GM12878 (cell line): ENCODE measurements at regions of chr4 and their contacts with region 1.

Region 1: DNA sequence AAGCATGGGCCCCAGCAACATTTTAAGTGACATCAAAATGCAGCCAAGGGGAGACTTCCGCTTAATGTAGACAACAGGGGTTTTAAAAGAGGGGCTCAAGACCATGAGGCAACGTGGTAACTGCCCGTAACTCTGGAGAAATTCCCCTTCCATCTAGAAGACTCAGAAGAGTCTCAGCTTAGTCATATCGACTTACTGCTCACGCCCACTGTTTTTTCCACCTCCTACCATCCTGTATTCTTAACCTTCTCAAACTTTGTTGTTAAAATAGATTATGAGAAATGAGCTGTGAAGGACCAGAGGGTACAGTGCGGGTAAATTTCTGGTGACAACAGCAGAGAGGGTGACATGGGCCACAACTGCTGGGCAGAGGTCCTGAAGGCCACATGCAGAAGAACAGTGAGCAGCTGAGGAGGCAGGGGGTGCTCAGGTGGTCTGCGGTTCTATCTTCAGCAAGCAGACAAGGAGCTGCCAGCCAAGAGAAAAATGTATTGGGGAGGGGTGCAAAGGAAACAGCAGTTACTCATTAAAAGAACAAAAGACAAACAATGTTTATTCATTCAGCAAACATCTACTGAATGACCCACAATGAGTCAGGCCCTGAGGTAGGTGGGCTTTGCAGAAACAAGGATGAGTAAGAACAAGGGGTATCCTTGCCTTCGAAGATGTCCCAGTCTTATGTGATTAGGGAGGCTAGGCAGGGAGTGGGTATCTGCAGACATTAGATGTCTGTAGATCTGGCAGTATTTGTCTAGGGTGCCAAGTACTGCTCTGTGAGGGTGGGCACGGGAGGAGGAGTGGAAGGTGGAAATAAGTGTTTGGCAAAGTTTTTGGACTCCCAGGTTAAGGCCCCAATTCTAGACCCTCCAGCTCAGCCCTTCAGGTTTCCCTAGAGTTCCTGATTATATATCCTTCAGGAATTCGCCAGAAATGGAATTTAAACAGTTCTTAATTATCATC is 175.3 kb downstream of the TSPAN5 start:
- DNase-seq: peak; percentile 56
- ATAC-seq: peak; percentile 90
- H3K4me3 ChIP-seq: no peak overlapping the region; the same call in 1 of the 2 replicates
- H3K27ac ChIP-seq: no peak overlapping the region
- H3K4me1 ChIP-seq: peaks cover 9% of the 10 kb centered on the region
- H3K27me3 ChIP-seq: no peaks in the 10 kb centered on the region
- CTCF ChIP-seq: no peak
- EP300 ChIP-seq: peak; percentile 70 to 91
- POLR2A ChIP-seq: no peak
- RAD21 ChIP-seq: no peak

Region 2: DNA sequence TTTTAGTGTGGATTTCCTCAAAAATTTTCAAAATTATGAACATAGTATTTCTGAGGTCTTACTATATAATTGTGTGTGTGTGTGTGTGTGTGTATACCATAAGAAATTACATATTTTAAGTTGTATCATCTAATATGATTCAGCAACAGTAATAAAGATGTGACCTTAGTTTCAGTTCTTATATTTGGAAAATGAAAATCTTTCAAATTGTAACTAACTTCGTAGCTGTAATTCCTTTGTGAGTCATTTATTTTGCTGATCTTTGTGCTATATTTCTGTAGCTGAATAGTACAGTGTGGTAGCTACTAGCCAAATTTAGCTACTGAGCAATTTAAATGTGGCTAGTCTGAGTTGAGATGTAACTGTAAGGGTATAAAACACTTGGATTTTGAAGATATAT is 105.6 kb before region 1 on chr4:
- CTCF ChIA-PET with region 1: no interaction called
- POLR2A ChIA-PET with region 1: no interaction called
- RAD21 ChIA-PET with region 1: no interaction called
- SMC1A ChIA-PET with region 1: no interaction called
- in situ Hi-C with region 1: no loop called
- intact Hi-C with region 1: no loop called
- DNase-seq: no peak
- ATAC-seq: peak; percentile 63
- H3K4me3 ChIP-seq: no peak overlapping the region
- H3K27ac ChIP-seq: no peak overlapping the region
- H3K4me1 ChIP-seq: no peaks in the 10 kb centered on the region
- H3K27me3 ChIP-seq: no peaks in the 10 kb centered on the region
- CTCF ChIP-seq: no peak
- EP300 ChIP-seq: no peak
- POLR2A ChIP-seq: no peak
- RAD21 ChIP-seq: no peak

Region 3: GRCh38 chr4:98518559-98519267 is 35.6 kb after region 1 on chr4:
- CTCF ChIA-PET with region 1: no interaction called
- POLR2A ChIA-PET with region 1: no interaction called
- RAD21 ChIA-PET with region 1: interaction called, 7 read pairs
- SMC1A ChIA-PET with region 1: interaction called, 15 read pairs
- in situ Hi-C with region 1: no loop called
- intact Hi-C with region 1: no loop called
- DNase-seq: peak; percentile 19
- ATAC-seq: peak; percentile 93
- H3K4me3 ChIP-seq: no peak overlapping the region
- H3K27ac ChIP-seq: no peak overlapping the region
- H3K4me1 ChIP-seq: peaks cover 6% of the 10 kb centered on the region
- H3K27me3 ChIP-seq: no peaks in the 10 kb centered on the region
- CTCF ChIP-seq: no peak
- EP300 ChIP-seq: no peak
- POLR2A ChIP-seq: no peak
- RAD21 ChIP-seq: no peak

Region 4: GRCh38 chr4:98601708-98602107 is 118.6 kb after region 1 on chr4:
- CTCF ChIA-PET with region 1: no interaction called
- POLR2A ChIA-PET with region 1: no interaction called
- RAD21 ChIA-PET with region 1: interaction called, 3 read pairs
- SMC1A ChIA-PET with region 1: interaction called, 4 read pairs
- in situ Hi-C with region 1: no loop called
- intact Hi-C with region 1: loop called (anchors 5 kb)
- DNase-seq: no peak
- ATAC-seq: peak; percentile 81
- H3K4me3 ChIP-seq: no peak overlapping the region
- H3K27ac ChIP-seq: no peak overlapping the region
- H3K4me1 ChIP-seq: no peaks in the 10 kb centered on the region
- H3K27me3 ChIP-seq: no peaks in the 10 kb centered on the region
- CTCF ChIP-seq: no peak; a peak in 1 of 6 replicates
- EP300 ChIP-seq: no peak
- POLR2A ChIP-seq: no peak
- RAD21 ChIP-seq: no peak

Region 5: GRCh38 chr4:98658287-98659105 is 175.4 kb after region 1 on chr4 and contains the start of gene TSPAN5:
- CTCF ChIA-PET with region 1: interaction called, 3 read pairs
- POLR2A ChIA-PET with region 1: no interaction called
- RAD21 ChIA-PET with region 1: interaction called, 3 read pairs
- SMC1A ChIA-PET with region 1: interaction called, 23 read pairs
- in situ Hi-C with region 1: no loop called
- intact Hi-C with region 1: loop called (anchors 5 kb)
- DNase-seq: no peak
- ATAC-seq: peak; percentile 84
- H3K4me3 ChIP-seq: peak within 1 kb of the TSS; percentile 65
- H3K27ac ChIP-seq: no peak within 1 kb of the TSS
- H3K4me1 ChIP-seq: peaks cover 10% of the 10 kb centered on the region
- H3K27me3 ChIP-seq: peaks cover 4 to 23% of the 10 kb centered on the region in 2 experiments
- CTCF ChIP-seq: no peak
- EP300 ChIP-seq: no peak
- POLR2A ChIP-seq: peak; percentile 33; the same call in 1 of the 2 replicates
- RAD21 ChIP-seq: no peak
- polyA plus RNA-seq, gene TSPAN5: 0.22 to 0.23 TPM